Heart right ventricle (tissue), 16 donors: ENCODE measurements at regions of chr16 and their contacts with region 1.

Region 1: DNA sequence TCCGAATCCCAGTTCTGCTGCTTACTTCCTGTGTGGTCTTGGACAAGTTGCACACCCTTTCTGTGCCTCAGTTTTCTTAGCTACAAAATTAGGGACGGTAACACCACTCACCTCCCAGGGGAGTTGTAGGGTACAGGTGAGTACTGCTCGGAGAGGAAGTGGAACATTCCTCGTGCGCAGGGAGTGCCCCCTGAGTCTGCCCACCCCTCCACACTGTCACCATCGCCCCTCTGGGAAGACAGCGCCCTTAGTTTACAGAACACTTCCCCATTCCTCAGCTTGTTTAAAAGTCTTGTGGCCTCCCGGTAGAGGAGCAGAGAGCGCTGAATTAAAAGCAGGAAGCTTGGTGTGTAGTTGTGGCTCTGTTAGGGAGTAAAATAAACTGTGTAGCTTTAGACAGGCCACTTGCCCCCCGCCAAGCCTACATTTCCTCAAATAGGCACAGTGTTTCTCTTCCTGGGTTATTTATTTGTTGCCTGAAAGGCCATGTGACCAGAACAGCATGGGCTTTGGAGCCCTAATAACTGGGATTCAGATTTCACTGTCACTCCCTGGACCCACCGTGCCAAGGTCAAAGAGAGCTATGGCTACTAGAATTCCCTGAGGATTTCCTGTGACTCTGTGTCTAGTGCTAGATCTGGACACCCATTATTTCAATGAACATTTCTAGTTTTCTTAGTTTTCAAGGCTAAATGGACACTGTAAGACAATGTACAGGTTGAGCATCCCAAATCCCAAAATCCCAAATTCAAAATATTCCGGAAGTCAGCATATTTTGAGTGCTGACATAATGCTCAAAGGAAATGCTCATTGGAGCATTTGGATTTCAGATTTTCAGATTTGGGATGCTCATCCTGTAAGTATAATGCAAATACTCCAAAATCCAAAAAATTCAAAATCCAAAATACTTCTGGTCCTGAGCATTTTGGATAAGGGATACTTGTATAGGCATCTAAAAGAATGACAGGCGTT is 372.5 kb downstream of the SNX29 start:
- DNase-seq: no peak
- ATAC-seq: peak in 1 of 8 donors; percentile 14
- H3K4me3 ChIP-seq: no peak overlapping the region
- H3K27ac ChIP-seq: no peak overlapping the region
- H3K4me1 ChIP-seq: peaks cover 0 to 9% (median 0%) of the 10 kb centered on the region in 9 donors
- H3K27me3 ChIP-seq: no peaks in the 10 kb centered on the region
- CTCF ChIP-seq: no peak

Region 2: DNA sequence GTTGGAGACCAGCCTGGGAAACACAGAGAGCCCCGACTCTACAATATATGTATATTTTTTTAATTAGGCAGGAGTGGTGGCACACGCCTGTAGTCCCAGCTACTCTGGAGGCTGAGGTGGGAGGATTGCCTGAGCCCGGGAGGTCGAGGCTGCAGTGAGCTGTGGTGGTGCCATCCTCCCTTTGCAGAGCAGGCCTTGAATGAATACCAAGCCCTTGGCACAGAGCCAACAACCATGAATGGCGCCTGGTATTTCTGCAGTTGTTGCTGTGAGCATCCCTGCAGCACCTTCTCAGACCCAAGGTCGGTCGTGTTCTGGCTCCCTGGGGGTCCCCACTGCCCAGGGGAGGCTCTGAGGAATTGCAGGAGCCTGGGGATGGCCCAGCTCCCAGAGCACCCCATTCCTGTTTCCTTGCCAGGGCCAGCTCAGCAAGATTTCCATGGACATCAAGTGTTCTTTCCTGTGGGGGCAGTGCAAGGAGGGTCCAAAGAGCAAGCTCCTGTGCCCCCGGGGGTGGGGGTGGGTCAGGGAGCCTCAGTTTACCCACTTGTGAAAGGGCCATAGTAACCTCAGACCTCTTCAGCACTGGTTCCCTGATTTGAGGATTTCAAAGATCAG is 1029.4 kb before region 1 on chr16:
- intact Hi-C with region 1: loop called in 1 of 10 experiments (anchors 5 kb)
- DNase-seq: no peak
- ATAC-seq: no peak
- H3K4me3 ChIP-seq: no peak overlapping the region
- H3K27ac ChIP-seq: no peak overlapping the region
- H3K4me1 ChIP-seq: no peaks in the 10 kb centered on the region
- H3K27me3 ChIP-seq: no peaks in the 10 kb centered on the region
- CTCF ChIP-seq: no peak

Region 3: DNA sequence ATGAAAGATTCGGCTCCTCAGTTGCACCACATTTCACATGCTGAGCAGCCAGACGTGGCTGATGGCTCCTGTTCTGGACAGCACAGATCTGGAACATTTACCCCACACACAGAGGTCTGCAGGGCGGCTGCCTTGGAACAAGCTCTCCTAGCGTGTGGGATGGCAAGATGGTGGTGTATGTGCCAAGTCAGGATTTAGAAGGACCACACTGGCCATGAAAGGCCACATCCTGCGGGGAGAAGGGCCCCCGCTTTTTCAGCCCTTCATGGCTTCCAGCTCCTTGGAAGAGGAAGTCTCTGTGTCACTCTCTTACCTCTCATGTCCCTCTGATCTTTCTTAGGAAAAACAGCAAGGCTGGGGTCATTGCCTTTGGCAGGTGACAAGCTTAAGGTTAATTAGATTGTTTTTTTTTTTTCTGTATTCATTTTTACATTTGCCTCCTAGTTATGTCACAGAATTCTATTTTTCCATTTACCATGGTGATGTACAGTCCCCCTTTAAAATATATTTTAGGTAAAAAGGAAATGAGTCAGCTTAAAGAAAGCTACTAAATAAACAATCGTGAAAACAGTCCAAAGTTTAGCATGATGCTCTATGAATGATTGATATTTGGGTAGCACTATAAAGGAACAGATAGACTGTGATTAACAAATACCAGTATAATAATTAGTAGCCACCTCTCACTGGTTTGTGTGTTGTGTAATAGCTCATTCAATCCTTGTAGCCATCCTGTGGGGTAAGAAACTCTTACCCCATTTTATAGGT is 58.1 kb after region 1 on chr16:
- intact Hi-C with region 1: loop called in 1 of 10 experiments (anchors 2 kb)
- DNase-seq: no peak
- ATAC-seq: no peak
- H3K4me3 ChIP-seq: no peak overlapping the region
- H3K27ac ChIP-seq: no peak overlapping the region
- H3K4me1 ChIP-seq: peaks cover 0 to 11% (median 0%) of the 10 kb centered on the region in 9 donors
- H3K27me3 ChIP-seq: no peaks in the 10 kb centered on the region
- CTCF ChIP-seq: no peak